ENCODE measurements at regions of chr2 and their contacts with region 1.

Region 1: DNA sequence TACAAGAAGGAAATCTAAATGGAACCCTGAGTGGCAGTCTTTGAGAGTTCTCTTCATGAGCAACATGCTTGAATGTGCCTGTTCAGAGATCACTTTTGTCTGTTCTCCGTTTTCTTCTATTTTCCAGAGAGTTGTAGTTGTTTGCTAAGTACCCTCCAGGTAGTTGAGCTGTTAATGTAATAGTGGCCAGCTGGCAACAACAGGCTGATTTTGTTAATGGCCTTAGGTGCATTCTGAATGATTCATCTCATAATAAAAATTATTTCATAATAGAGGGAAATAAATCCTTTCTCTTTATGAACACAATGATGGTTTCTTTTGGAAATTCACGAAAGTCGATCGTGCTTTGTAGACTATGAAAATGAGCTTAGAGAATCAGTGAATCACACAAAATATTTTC is 136.8 kb downstream of the LRP1B start:
- DNase-seq: peak; percentile 43
- ATAC-seq: peak; percentile 92
- H3K4me3 ChIP-seq: no peak overlapping the region
- H3K27ac ChIP-seq: no peak overlapping the region
- H3K4me1 ChIP-seq: 0 out of 2 replicates have a peak, but pooled peaks cover 4% of the 10 kb centered on the region
- H3K27me3 ChIP-seq: no peaks in the 10 kb centered on the region
- CTCF ChIP-seq: no peak

Region 2: GRCh38 chr2:141271346-141271745 is 722.7 kb before region 1 on chr2:
- CTCF ChIA-PET with region 1: interaction called, 11 read pairs
- POLR2A ChIA-PET with region 1: no interaction called
- intact Hi-C with region 1: no loop called
- DNase-seq: no peak
- ATAC-seq: no peak
- H3K4me3 ChIP-seq: no peak overlapping the region
- H3K27ac ChIP-seq: no peak overlapping the region
- H3K4me1 ChIP-seq: no peaks in the 10 kb centered on the region
- H3K27me3 ChIP-seq: no peaks in the 10 kb centered on the region
- CTCF ChIP-seq: no peak

Region 3: DNA sequence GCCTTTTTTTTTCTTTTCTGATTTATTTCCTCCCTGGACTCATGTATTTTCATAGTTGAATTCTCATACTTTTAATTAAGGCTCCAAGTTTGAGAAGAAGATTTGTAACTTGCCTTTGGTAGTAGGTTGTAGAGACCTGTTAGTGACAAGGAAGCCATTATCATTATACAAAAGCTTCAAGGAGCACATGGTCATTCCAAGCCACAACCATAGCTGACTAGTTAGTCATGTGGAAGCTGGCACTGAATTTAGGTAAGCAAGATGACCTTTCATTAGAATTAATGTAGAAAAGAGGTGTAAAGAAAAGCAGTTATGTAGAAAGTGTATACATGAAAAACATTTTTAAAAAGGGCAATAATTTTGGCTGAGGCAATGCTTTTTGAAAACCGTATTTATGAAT is 47.0 kb after region 1 on chr2:
- CTCF ChIA-PET with region 1: no interaction called
- POLR2A ChIA-PET with region 1: no interaction called
- intact Hi-C with region 1: loop called (anchors 5 kb)
- DNase-seq: peak; percentile 64
- ATAC-seq: peak; percentile 62
- H3K4me3 ChIP-seq: no peak overlapping the region
- H3K27ac ChIP-seq: peak overlapping the region; percentile 61
- H3K4me1 ChIP-seq: peaks cover 24% of the 10 kb centered on the region
- H3K27me3 ChIP-seq: no peaks in the 10 kb centered on the region
- CTCF ChIP-seq: no peak

Measured in PC-3 (cell line).